CD4-positive, alpha-beta memory T cell (primary cell): ENCODE measurements at regions of chr15 and their contacts with region 1.

Region 1: GRCh38 chr15:44536962-44537734 is at the start of gene EIF3J:
- DNase-seq: peak; percentile 94 to 96 (median 96)
- H3K4me3 ChIP-seq: peak within 1 kb of the TSS; percentile 71 to 90
- H3K4me3 Mint-ChIP-seq: peak within 1 kb of the TSS; percentile 83 to 96 (median 92)
- H3K27ac ChIP-seq: peak within 1 kb of the TSS; percentile 91
- H3K27ac Mint-ChIP-seq: peak within 1 kb of the TSS; percentile 88 to 97 (median 96)
- H3K4me1 ChIP-seq: peaks cover 48% of the 10 kb centered on the region
- H3K4me1 Mint-ChIP-seq: peaks cover 36 to 68% (median 48%) of the 10 kb centered on the region in 4 donors
- H3K27me3 ChIP-seq: no peaks in the 10 kb centered on the region
- H3K27me3 Mint-ChIP-seq: no peaks in the 10 kb centered on the region
- total RNA-seq, gene EIF3J: 65.0 to 76.8 TPM

Region 2: GRCh38 chr15:43808960-43809678 is 728.0 kb before region 1 on chr15:
- CTCF ChIA-PET with region 1: no interaction called
- POLR2A ChIA-PET with region 1: no interaction called
- intact Hi-C with region 1: no loop called
- DNase-seq: no peak
- H3K4me3 ChIP-seq: no peak overlapping the region
- H3K4me3 Mint-ChIP-seq: no peak overlapping the region
- H3K27ac ChIP-seq: no peak overlapping the region
- H3K27ac Mint-ChIP-seq: peak overlapping the region in 3 of 7 donors; percentile 13 to 46 (median 25)
- H3K4me1 ChIP-seq: no peaks in the 10 kb centered on the region
- H3K4me1 Mint-ChIP-seq: no peaks in the 10 kb centered on the region
- H3K27me3 ChIP-seq: no peaks in the 10 kb centered on the region
- H3K27me3 Mint-ChIP-seq: no peaks in the 10 kb centered on the region

Region 3: DNA sequence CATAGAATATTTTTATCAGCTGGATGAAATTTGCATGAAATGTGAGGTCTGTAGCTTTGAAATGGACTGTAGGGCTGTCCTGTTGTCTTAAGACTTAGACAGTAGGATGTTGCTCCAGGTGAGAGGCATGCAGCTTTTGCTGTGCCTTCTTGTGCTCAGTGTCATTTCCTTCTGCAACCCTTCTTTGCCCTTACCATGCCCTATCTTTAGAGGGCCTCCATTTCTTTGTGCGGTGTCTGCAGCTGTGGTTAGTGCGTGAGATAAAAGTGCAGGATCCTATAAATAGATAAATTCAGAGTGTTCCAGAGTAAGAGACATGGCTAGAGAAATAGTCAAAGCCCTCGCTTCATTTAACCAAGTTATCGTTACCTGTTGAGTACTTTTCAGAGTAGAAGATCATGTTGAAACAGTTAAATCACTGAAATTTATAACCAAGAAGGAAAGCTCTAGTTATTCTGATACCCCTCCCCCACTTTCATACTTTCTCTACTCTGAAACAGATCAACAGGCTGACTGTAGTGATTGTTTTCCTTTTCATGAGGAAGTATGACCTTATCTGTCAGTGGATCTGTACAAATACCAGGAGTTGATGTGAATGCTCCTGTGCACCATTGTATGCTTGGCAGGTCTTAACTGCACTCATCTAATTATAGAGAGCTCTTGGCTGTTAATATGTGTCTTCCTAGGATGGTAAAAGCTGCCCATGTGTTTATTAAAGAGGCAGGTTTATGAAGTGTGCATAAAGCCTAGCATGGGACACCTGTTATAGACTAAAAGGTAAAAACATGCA is 18.0 kb after region 1 on chr15:
- CTCF ChIA-PET with region 1: interaction called, 5 read pairs
- POLR2A ChIA-PET with region 1: interaction called, 16 read pairs
- intact Hi-C with region 1: loop called (anchors 2 kb)
- DNase-seq: peak in 2 of 5 donors; percentile 16 to 21
- H3K4me3 ChIP-seq: peak overlapping the region in 1 of 2 donors; percentile 13
- H3K4me3 Mint-ChIP-seq: peak overlapping the region in 7 of 8 donors; percentile 6 to 66 (median 41)
- H3K27ac ChIP-seq: no peak overlapping the region
- H3K27ac Mint-ChIP-seq: peak overlapping the region; percentile 14 to 85 (median 75)
- H3K4me1 ChIP-seq: peaks cover 34% of the 10 kb centered on the region
- H3K4me1 Mint-ChIP-seq: peaks cover 25 to 46% (median 37%) of the 10 kb centered on the region in 4 donors
- H3K27me3 ChIP-seq: no peaks in the 10 kb centered on the region
- H3K27me3 Mint-ChIP-seq: no peaks in the 10 kb centered on the region

Region 4: GRCh38 chr15:44606740-44607139 is 69.6 kb after region 1 on chr15:
- CTCF ChIA-PET with region 1: no interaction called
- POLR2A ChIA-PET with region 1: no interaction called
- intact Hi-C with region 1: no loop called
- DNase-seq: no peak
- H3K4me3 ChIP-seq: no peak overlapping the region
- H3K4me3 Mint-ChIP-seq: no peak overlapping the region
- H3K27ac ChIP-seq: no peak overlapping the region
- H3K27ac Mint-ChIP-seq: peak overlapping the region in 2 of 7 donors; percentile 10
- H3K4me1 ChIP-seq: no peaks in the 10 kb centered on the region
- H3K4me1 Mint-ChIP-seq: no peaks in the 10 kb centered on the region
- H3K27me3 ChIP-seq: no peaks in the 10 kb centered on the region
- H3K27me3 Mint-ChIP-seq: no peaks in the 10 kb centered on the region